Common myeloid progenitor, CD34-positive (primary cell): ENCODE measurements at regions of chr4 and their contacts with region 1.

Region 1: DNA sequence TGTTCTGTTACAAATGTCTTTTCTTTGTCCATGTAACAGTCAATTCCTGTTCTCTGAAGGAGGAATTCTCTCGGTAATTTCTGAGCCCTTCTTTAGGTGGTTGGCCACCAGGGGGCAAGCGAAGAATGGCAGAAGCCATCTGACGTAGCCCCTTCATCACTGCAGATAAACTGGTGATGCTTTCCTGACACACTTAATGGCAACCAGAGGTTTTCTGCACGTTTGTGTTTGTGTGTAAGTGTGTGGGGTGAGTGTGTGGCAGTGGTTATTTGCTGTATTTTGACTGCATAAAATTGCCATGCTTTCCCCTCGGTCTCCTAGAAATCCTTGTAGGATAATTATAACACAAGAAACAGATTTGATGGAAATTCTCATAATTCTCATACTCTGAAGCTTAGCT is 64.8 kb upstream of the STOX2 start:
- DNase-seq: peak; percentile 79 to 86 (median 84)
- H3K4me3 ChIP-seq: no peak overlapping the region
- H3K27ac ChIP-seq: no peak overlapping the region
- H3K4me1 ChIP-seq: no peaks in the 10 kb centered on the region
- H3K27me3 ChIP-seq: peaks cover 0 to 2% (median 0%) of the 10 kb centered on the region in 5 experiments

Region 2: GRCh38 chr4:183017962-183018361 is 822.3 kb before region 1 on chr4:
- CTCF ChIA-PET with region 1: no interaction called
- POLR2A ChIA-PET with region 1: no interaction called
- DNase-seq: no peak
- H3K4me3 ChIP-seq: no peak overlapping the region
- H3K27ac ChIP-seq: no peak overlapping the region
- H3K4me1 ChIP-seq: no peaks in the 10 kb centered on the region
- H3K27me3 ChIP-seq: peaks cover 0 to 3% (median 0%) of the 10 kb centered on the region in 5 experiments

Region 3: GRCh38 chr4:183887351-183887750 is 47.0 kb after region 1 on chr4:
- CTCF ChIA-PET with region 1: no interaction called
- POLR2A ChIA-PET with region 1: no interaction called
- DNase-seq: no peak
- H3K4me3 ChIP-seq: no peak overlapping the region
- H3K27ac ChIP-seq: no peak overlapping the region
- H3K4me1 ChIP-seq: no peaks in the 10 kb centered on the region
- H3K27me3 ChIP-seq: peaks cover 0 to 2% (median 0%) of the 10 kb centered on the region in 5 experiments

Region 4: GRCh38 chr4:183971929-183972490 is 131.7 kb after region 1 on chr4:
- CTCF ChIA-PET with region 1: no interaction called
- POLR2A ChIA-PET with region 1: no interaction called
- DNase-seq: no peak
- H3K4me3 ChIP-seq: no peak overlapping the region
- H3K27ac ChIP-seq: no peak overlapping the region
- H3K4me1 ChIP-seq: peaks cover 0 to 12% (median 2%) of the 10 kb centered on the region in 4 experiments
- H3K27me3 ChIP-seq: no peaks in the 10 kb centered on the region

Region 5: GRCh38 chr4:183984566-183984965 is 144.3 kb after region 1 on chr4:
- CTCF ChIA-PET with region 1: no interaction called
- POLR2A ChIA-PET with region 1: no interaction called
- DNase-seq: no peak
- H3K4me3 ChIP-seq: no peak overlapping the region
- H3K27ac ChIP-seq: no peak overlapping the region
- H3K4me1 ChIP-seq: peaks cover 0 to 12% (median 2%) of the 10 kb centered on the region in 4 experiments
- H3K27me3 ChIP-seq: no peaks in the 10 kb centered on the region

Region 6: GRCh38 chr4:184100297-184100885 is 260.1 kb after region 1 on chr4:
- CTCF ChIA-PET with region 1: interaction called, 23 read pairs
- POLR2A ChIA-PET with region 1: no interaction called
- DNase-seq: peak in 2 of 3 donors; percentile 23 to 30
- H3K4me3 ChIP-seq: no peak overlapping the region
- H3K27ac ChIP-seq: no peak overlapping the region
- H3K4me1 ChIP-seq: peaks cover 0 to 10% (median 0%) of the 10 kb centered on the region in 4 experiments
- H3K27me3 ChIP-seq: peaks cover 0 to 4% (median 0%) of the 10 kb centered on the region in 5 experiments

Region 7: DNA sequence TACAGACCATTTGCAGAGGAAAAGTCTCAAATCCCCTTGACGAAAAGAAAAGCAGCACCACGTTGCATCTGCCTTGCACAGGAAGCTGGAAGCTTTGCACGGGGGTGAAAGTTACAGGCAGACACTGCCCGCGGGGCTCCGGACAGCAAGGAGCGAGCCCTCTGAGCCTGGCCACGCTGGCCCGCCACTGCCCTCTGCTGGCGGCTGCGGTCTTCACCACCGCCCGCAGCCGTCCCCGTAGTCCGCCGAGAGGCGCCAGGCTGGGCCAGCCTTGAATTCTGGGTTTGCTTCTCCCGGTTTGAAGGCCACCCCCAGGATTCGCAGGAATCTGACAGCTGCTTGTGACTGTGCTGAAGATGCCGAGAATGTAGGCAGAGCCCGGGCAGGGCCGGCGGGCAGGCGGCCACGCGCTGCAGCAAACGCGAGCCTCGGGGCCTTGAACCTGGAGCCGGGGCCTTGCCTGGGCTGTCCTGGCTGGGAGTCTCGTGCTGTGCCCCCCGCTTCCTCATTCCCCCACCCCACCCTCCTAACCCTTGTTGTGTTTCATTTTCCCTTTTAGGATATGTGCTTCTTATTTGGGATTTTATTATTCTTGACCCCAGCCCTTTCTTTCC is 328.2 kb after region 1 on chr4:
- CTCF ChIA-PET with region 1: interaction called, 41 read pairs
- POLR2A ChIA-PET with region 1: no interaction called
- DNase-seq: peak; percentile 41 to 61 (median 54)
- H3K4me3 ChIP-seq: peak overlapping the region in 3 of 7 experiments; percentile 14 to 59 (median 52)
- H3K27ac ChIP-seq: no peak overlapping the region
- H3K4me1 ChIP-seq: peaks cover 0 to 9% (median 2%) of the 10 kb centered on the region in 4 experiments
- H3K27me3 ChIP-seq: peaks cover 0 to 41% (median 20%) of the 10 kb centered on the region in 5 experiments